Activated CD4-positive, alpha-beta memory T cell treated with anti-CD3 and anti-CD28 coated beads for 36 hours (primary cell): ENCODE measurements at regions of chr7 and their contacts with region 1.

Region 1: DNA sequence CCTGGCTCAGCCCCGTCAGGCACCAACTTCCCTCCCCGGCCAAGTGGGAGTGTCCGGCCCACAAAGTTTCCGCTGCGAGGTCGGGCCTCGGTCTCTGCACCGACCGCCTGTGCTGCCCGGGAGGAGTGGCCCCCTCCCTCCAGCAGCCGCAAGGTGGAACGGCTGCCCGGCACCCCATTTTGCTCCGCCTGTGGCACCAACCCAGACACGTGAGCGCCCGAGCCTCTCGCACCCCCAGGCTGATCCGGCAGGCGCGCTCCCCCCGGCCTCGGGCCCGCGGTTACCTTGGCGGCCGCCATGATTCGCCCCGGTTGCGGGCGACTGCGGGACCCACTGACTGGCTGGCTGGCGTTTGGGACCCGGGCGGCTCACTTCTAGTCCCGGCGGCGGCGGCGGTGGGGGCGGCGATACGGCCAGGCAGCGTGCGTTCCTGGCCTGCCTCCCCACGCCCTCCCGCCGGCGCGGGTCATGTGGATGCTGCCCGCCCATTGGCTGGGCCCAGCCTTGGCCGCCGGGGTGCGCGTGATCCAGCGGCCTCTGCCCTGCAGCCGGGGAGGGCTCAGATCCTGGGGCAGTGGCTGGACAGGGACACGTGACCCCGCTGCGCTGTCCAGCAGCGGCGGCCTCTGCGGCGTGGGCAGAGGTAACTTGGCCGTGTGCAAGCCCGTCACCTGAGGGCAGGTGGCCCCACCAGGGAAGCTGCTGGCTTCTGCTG is at the start of gene SLC25A13:
- DNase-seq: peak; percentile 75
- H3K4me3 Mint-ChIP-seq: peak within 1 kb of the TSS; percentile 88
- H3K27ac Mint-ChIP-seq: peak within 1 kb of the TSS; percentile 93
- H3K4me1 Mint-ChIP-seq: peaks cover 41% of the 10 kb centered on the region
- H3K27me3 Mint-ChIP-seq: no peaks in the 10 kb centered on the region
- total RNA-seq, gene SLC25A13: 7.5 to 7.9 TPM

Region 2: DNA sequence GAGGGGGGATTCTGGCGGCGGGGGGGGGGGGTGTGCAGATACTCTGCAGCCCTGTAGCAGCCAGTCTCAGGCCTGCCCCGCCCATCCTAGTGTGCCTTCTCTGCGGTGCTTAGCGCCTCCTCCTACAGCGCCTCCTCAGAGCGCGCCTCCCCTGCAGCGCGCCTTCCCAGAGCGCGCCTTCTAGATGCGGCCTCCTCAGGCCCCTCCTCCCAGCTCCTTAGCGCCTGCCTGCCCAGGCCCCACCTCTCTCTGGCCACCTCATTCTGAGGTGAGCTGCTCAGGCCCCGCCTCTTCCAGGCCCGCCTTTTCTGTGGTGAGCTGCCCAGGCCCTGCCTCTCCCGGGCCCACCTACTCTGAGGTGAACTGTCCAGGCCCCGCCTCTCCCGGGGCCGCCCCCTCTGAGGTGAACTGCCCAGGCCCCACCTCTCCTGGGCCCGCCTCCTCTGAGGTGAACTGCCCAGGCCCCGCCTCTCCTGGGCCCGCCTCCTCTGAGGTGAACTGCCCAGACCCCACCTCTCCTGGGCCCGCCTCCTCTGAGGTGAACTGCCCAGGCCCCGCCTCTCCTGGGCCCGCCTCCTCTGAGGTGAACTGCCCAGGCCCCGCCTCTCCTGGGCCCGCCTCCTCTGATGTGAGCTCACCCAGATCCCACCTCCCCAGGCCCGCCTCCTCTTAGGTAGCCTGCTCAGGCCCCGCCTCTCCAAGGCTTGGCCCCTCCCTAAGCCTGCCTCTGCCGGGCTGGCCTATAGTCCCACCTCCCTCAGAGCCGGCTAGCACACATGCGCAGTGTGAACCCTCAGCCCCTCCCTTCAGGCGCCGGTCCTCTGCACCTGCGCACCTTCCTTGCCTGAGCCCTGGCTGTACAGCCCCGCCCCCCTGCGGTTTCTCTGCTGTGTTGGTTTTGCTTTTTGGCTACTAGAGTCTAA is 1663.8 kb before region 1 on chr7:
- CTCF ChIA-PET with region 1: no interaction called
- POLR2A ChIA-PET with region 1: no interaction called
- intact Hi-C with region 1: loop called (anchors 10 kb)
- DNase-seq: peak; percentile 95
- H3K4me3 Mint-ChIP-seq: peak overlapping the region; percentile 85
- H3K27ac Mint-ChIP-seq: no peak overlapping the region
- H3K4me1 Mint-ChIP-seq: peaks cover 12% of the 10 kb centered on the region
- H3K27me3 Mint-ChIP-seq: peaks cover 16% of the 10 kb centered on the region

Region 3: DNA sequence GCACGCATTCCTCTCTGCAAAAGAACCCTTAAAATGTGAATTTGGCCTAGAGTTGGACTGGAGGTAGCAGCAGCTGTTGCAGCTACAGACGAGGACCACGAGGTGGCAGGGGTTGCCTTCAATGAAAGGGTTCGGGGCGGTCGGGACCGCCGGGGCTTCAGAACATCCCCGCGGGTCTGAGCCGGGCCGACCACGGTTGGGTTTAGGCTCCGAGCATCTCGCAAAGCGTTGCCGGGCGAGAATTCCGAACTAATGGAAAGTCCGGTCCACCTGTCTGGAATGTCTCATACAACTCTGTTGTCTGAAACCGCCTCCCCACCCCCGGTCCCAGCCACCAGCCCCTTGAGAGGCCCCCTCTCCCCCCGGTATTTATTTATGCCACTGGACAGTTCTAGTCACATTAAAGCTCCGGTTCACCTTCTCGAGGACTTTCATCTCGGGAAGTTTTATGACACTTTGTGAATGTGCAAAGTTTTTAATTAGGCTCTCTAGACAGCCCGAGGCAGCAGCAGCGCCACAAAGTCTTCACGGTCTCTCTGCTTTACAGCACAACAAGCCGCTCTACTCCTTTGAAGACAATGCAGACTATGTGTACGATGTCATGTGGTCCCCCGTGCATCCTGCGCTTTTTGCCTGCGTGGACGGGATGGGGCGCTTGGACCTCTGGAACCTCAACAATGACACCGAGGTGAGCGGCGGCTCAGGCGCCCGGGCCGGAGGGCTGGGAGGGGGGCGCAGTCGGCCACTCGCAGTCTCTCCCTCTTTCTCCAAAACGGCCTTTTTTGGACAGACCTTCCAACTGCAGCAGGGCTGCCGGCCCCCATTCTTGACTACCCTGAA is 246.1 kb before region 1 on chr7:
- CTCF ChIA-PET with region 1: no interaction called
- POLR2A ChIA-PET with region 1: no interaction called
- intact Hi-C with region 1: loop called (anchors 5 kb)
- DNase-seq: peak; percentile 58
- H3K4me3 Mint-ChIP-seq: peak overlapping the region; percentile 53
- H3K27ac Mint-ChIP-seq: no peak overlapping the region
- H3K4me1 Mint-ChIP-seq: peaks cover 7% of the 10 kb centered on the region
- H3K27me3 Mint-ChIP-seq: peaks cover 20% of the 10 kb centered on the region

Region 4: GRCh38 chr7:96303686-96304443 is 17.9 kb before region 1 on chr7:
- CTCF ChIA-PET with region 1: no interaction called
- POLR2A ChIA-PET with region 1: interaction called, 18 read pairs
- intact Hi-C with region 1: loop called (anchors 1 kb)
- DNase-seq: no peak
- H3K4me3 Mint-ChIP-seq: peak overlapping the region; percentile 23
- H3K27ac Mint-ChIP-seq: peak overlapping the region; percentile 71
- H3K4me1 Mint-ChIP-seq: peaks cover 52% of the 10 kb centered on the region
- H3K27me3 Mint-ChIP-seq: no peaks in the 10 kb centered on the region

Region 5: GRCh38 chr7:96709381-96710228 is 387.8 kb after region 1 on chr7 and contains the start of gene SEM1:
- CTCF ChIA-PET with region 1: no interaction called
- POLR2A ChIA-PET with region 1: no interaction called
- intact Hi-C with region 1: loop called (anchors 10 kb)
- DNase-seq: peak; percentile 76
- H3K4me3 Mint-ChIP-seq: peak within 1 kb of the TSS; percentile 98
- H3K27ac Mint-ChIP-seq: peak within 1 kb of the TSS; percentile 96
- H3K4me1 Mint-ChIP-seq: peaks cover 23% of the 10 kb centered on the region
- H3K27me3 Mint-ChIP-seq: peaks cover 2% of the 10 kb centered on the region
- total RNA-seq, gene SEM1: 41.6 to 42.4 TPM

Region 6: DNA sequence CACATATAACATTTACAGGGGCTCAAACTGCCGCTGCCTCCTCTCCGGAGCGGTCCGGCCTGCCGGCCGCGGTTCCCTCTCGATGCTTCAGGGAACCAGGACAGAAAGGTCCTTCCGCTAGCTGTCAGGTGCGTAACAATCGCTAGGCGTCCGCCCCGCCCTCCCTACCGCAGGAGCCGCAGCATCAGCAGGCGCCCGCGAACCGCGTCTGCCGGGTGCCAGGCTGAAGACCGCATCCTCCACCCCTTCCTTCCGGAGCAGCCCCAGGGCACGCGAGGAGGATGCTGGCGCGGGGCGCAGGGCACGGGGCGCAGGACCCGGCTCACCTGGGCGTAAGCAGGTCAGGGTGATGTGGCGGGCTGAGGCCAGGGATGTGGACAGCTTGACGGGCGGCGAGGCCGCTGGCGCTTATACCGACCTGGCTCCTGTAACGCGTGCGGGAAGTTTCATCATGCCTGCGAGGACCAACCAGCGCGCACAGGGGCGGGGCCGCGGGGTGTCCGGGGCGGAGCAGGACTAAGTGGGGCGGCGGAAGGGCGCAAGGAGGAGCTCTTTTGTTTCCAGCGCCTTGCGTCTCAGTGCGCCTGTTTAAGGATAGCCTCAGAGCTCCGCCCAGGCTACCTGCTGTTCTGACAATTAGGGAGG is 1550.3 kb after region 1 on chr7 and contains the start of gene ASNS:
- CTCF ChIA-PET with region 1: no interaction called
- POLR2A ChIA-PET with region 1: no interaction called
- intact Hi-C with region 1: loop called (anchors 10 kb)
- DNase-seq: peak; percentile 96
- H3K4me3 Mint-ChIP-seq: peak within 1 kb of the TSS; percentile 86
- H3K27ac Mint-ChIP-seq: peak within 1 kb of the TSS; percentile 91
- H3K4me1 Mint-ChIP-seq: peaks cover 19% of the 10 kb centered on the region
- H3K27me3 Mint-ChIP-seq: no peaks in the 10 kb centered on the region
- total RNA-seq, gene ASNS: 200 to 214 TPM